Right ventricle myocardium superior (tissue), 1 donor: ENCODE measurements at regions of chr7 and their contacts with region 1.

Region 1: GRCh38 chr7:74026903-74027551 is 946 bp upstream of the ELN start:
- DNase-seq: peak; percentile 90
- ATAC-seq: peak; percentile 68

Region 2: DNA sequence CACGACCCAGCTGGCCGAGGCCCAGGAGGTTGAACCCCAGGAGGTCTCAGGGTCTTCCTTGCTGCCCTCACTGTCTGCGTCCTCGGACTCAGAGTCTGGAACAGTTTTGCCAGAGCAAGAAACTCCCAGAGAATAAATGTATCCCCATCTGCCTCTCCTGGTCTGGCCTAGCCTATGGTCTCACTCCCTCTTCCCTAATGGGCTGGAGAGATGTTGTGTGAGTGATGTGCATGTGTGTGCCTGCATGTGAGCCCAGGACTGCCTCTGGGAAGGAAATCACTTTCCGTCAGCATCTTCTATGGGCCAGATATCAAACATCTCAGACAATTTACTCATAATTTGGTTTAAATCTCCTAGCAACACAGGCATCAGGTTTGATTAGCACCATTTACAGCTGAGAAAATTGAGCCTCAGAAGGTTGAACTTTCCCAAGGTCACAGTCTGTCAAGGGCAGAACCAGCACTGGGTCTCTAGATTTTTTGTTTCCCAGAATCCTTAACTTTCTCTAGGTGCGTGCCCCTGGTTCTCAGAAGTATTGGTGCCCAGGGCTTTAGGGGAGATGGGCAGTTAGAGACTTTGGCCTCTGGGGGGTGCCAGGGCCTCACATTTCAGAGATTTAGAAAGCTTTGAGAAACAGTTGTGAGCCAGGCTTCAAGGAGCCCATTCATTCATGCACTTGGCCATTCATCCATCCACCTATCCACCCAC is 161.1 kb before region 1 on chr7:
- intact Hi-C with region 1: loop called (anchors 5 kb)
- DNase-seq: no peak
- ATAC-seq: peak; percentile 82

Region 3: GRCh38 chr7:73894733-73895551 is 132.1 kb before region 1 on chr7:
- intact Hi-C with region 1: loop called (anchors 10 kb)
- DNase-seq: peak; percentile 91
- ATAC-seq: peak; percentile 80

Region 4: DNA sequence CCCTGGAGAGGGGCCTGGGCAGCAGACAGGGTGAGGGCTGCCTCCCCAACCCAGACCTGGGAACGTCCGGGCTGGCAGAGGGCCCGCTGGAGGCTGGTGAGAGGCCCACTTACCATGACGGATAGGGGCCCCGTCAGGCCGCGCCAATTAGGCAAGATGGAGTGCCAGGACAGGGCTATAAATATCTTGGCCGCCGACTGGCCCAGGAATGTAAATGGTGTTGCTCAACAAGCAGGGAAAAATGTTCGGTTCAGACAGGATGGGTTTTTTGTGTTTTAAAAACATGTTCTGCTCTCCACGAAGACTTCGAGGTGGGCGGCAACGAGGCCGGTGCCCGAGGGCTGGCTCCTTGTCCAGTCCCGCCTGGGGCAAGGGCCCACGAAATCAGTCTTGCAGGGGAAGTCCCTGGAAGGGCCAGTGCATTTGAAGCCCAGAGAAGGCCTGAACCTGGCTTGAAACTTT is 34.9 kb before region 1 on chr7:
- intact Hi-C with region 1: no loop called
- DNase-seq: peak; percentile 75
- ATAC-seq: peak; percentile 76